Esophagus muscularis mucosa (tissue), 4 donors: ENCODE measurements at regions of chr14 and their contacts with region 1.

Region 1: DNA sequence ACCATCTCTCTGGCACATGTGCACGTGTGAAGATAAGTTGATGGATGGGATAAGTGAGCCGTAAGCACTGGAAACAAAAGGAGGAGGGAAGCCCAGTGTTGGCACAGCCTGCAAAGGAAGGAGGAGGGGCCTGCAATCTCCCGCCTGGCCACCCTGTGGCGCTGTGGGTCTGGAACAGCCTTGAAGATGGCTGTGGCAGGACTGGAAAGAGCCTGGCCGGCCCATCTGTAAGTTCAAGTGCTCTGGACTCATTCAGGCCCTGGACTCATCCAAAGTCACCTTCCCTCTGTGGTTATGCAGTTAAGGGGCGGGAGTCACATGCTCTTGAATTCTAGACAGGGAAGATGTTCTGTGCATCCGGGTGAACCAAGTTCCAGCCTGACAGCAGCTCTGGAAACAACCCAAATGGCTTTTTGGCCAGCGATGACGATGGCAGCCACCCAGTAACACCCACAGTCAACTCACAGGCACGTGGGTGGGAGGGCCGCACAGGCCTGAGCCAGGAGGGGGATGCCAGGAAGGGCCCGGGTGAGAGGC is 50.4 kb downstream of the CHGA start:
- DNase-seq: peak; percentile 94
- H3K4me3 ChIP-seq: no peak overlapping the region
- H3K27ac ChIP-seq: peak overlapping the region; percentile 79 to 89 (median 88)
- H3K4me1 ChIP-seq: peaks cover 25 to 56% (median 40%) of the 10 kb centered on the region in 4 donors
- H3K27me3 ChIP-seq: no peaks in the 10 kb centered on the region
- CTCF ChIP-seq: peak; percentile 90 to 93 (median 92)
- EP300 ChIP-seq: peak; percentile 54
- POLR2A ChIP-seq: no peak

Region 2: GRCh38 chr14:93033983-93034670 is 60.8 kb after region 1 on chr14:
- intact Hi-C with region 1: loop called (anchors 5 kb)
- DNase-seq: no peak
- H3K4me3 ChIP-seq: no peak overlapping the region
- H3K27ac ChIP-seq: peak overlapping the region; percentile 86 to 93 (median 86)
- H3K4me1 ChIP-seq: peaks cover 78 to 100% (median 99%) of the 10 kb centered on the region in 4 donors
- H3K27me3 ChIP-seq: no peaks in the 10 kb centered on the region
- CTCF ChIP-seq: peak; percentile 43 to 53 (median 49)
- EP300 ChIP-seq: no peak
- POLR2A ChIP-seq: no peak